Astrocyte of the cerebellum (primary cell): ENCODE measurements at regions of chr20 and their contacts with region 1.

Region 1: GRCh38 chr20:25600632-25601031 is 15.3 kb upstream of the NINL start:
- DNase-seq: no peak
- H3K4me3 ChIP-seq: no peak overlapping the region
- CTCF ChIP-seq: no peak

Region 2: DNA sequence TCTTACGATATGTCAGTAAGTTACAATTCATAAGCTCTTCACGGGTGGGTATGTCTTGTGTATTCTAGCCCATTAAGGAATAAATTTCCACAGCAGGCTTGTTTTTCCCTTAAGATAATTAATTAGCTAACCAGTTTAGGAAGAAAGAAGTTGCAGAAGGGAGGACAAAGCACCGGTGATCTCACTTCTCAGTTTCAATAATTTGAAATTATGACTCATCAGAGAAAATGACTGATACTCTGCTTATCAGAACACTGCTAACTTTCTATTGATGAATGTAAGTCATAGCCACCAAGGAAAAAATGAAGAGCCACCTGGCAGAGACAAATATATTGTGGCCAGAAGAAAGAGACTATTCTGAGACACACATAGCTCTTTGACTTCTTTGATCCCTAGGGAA is 440.2 kb before region 1 on chr20:
- in situ Hi-C with region 1: no loop called
- DNase-seq: no peak
- H3K4me3 ChIP-seq: no peak overlapping the region
- CTCF ChIP-seq: no peak

Region 3: GRCh38 chr20:25669826-25670422 is 69.3 kb after region 1 on chr20:
- in situ Hi-C with region 1: loop called (anchors 5 kb)
- DNase-seq: no peak
- H3K4me3 ChIP-seq: no peak overlapping the region
- CTCF ChIP-seq: no peak